ENCODE measurements at regions of chr5 and their contacts with region 1.

Region 1: GRCh38 chr5:17216176-17216973 is 1.1 kb upstream of the BASP1 start:
- DNase-seq: peak in 1 of 2 donors; percentile 24
- ATAC-seq: peak; percentile 38 to 39
- H3K4me3 ChIP-seq: peak overlapping the region in 3 of 4 donors; percentile 10 to 30 (median 14)
- H3K27ac ChIP-seq: no peak overlapping the region
- H3K4me1 ChIP-seq: peaks cover 0 to 9% of the 10 kb centered on the region in 2 donors
- H3K27me3 ChIP-seq: peaks cover 36 to 45% (median 42%) of the 10 kb centered on the region in 3 donors
- CTCF ChIP-seq: peak in 3 of 5 experiments; percentile 51 to 68 (median 57)
- POLR2A ChIP-seq: no peak

Region 2: GRCh38 chr5:17180957-17181723 is 35.2 kb before region 1 on chr5:
- in situ Hi-C with region 1: no loop called
- intact Hi-C with region 1: no loop called
- DNase-seq: no peak
- ATAC-seq: no peak
- H3K4me3 ChIP-seq: no peak overlapping the region
- H3K27ac ChIP-seq: no peak overlapping the region
- H3K4me1 ChIP-seq: peaks cover 3 to 14% of the 10 kb centered on the region in 2 donors
- H3K27me3 ChIP-seq: no peaks in the 10 kb centered on the region
- CTCF ChIP-seq: no peak
- POLR2A ChIP-seq: no peak

Region 3: GRCh38 chr5:17269201-17269600 is 52.8 kb after region 1 on chr5:
- in situ Hi-C with region 1: no loop called
- intact Hi-C with region 1: no loop called
- DNase-seq: no peak
- ATAC-seq: no peak
- H3K4me3 ChIP-seq: no peak overlapping the region
- H3K27ac ChIP-seq: no peak overlapping the region
- H3K4me1 ChIP-seq: no peaks in the 10 kb centered on the region
- H3K27me3 ChIP-seq: no peaks in the 10 kb centered on the region
- CTCF ChIP-seq: no peak
- POLR2A ChIP-seq: no peak

Region 4: DNA sequence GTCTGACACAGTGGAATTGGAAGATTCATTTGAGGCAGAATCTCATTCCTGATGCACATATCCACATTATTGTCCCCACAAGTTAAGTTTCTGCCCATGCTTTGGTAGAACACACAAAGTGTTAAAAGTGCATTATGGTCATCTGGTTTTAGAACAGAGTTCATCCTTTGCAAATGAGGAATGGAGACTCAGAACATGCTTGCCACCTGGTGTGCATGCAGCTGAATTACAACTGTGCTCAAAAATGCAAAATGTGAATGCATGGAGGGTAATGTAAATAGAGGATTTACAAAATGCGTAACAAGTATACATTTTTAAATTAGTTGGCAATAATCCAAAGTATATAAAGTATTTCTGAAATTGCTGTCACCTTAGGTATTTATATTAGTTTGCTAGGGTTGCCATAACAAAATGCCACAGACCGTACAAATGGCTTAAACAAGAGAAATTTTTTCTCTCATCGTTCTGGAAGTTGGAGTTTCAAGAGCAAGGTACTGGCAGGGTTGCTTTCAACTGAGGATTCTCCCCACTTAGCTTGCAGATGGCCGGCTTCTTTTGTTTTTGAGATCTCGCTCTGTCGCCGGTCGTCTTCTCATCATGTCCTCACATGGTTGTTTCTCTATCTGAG is 1089.0 kb after region 1 on chr5:
- in situ Hi-C with region 1: loop called in 2 of 4 experiments (anchors 5 to 10 kb)
- intact Hi-C with region 1: no loop called
- DNase-seq: no peak
- ATAC-seq: no peak
- H3K4me3 ChIP-seq: no peak overlapping the region
- H3K27ac ChIP-seq: no peak overlapping the region
- H3K4me1 ChIP-seq: no peaks in the 10 kb centered on the region
- H3K27me3 ChIP-seq: no peaks in the 10 kb centered on the region
- CTCF ChIP-seq: no peak
- POLR2A ChIP-seq: no peak